ENCODE measurements at regions of chr9 and their contacts with region 1.

Region 1: DNA sequence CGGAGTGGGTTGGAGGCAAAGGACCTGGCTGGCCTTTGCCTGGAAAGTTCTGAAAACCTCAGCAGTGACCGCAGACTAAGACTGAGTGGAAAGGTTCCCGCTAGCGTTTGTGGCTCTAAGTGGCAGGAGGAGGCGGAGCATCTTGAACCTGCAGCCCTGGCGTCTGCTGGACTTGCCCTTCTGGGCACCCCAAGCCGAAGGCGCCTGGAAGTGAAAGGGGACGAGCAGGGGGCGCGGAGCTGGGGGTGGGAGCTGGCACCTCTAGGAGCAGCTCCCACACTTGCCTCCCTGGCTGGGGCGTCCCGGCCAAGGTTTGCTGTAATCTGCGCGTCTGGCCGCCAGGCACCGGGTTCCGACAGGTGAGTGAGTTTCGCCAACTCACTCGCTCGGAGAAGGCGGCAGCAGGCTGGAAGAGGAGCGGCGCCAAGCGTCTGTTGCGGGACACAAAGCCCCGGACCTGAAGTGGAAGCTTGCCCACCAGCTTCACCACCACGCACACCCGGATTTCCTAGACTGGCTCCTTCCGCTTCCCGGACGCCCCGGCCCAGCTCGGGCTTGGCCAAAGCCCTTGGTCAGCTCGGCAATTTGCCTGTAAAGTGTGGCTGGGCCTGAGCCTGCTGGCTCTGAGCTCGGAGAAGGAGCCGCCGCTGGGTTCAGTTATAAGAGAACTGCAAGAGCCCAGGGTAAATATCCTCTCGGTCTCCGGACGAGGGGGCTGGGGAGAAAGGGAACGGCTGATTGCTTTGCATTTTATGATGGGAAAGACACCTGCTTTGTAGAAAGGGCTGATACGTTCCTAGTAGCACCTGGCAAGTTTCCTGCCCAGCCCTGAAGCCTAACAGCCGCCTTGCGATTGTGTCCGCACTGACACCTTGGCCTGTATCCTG is at the start of gene GNA14:
- DNase-seq: no peak
- H3K4me3 ChIP-seq: no peak within 1 kb of the TSS
- H3K4me3 Mint-ChIP-seq: peak within 1 kb of the TSS in 5 of 7 donors; percentile 12 to 65 (median 50)
- H3K27ac ChIP-seq: no peak within 1 kb of the TSS
- H3K27ac Mint-ChIP-seq: no peak within 1 kb of the TSS
- H3K4me1 ChIP-seq: no peaks in the 10 kb centered on the region
- H3K4me1 Mint-ChIP-seq: peaks cover 5 to 17% (median 8%) of the 10 kb centered on the region in 3 donors
- H3K27me3 ChIP-seq: no peaks in the 10 kb centered on the region
- H3K27me3 Mint-ChIP-seq: peaks cover 26 to 50% of the 10 kb centered on the region in 2 donors
- total RNA-seq, gene GNA14: not detected

Region 2: GRCh38 chr9:77632652-77633051 is 15.8 kb before region 1 on chr9:
- CTCF ChIA-PET with region 1: no interaction called
- POLR2A ChIA-PET with region 1: interaction called, 14 read pairs
- DNase-seq: no peak
- H3K4me3 ChIP-seq: no peak overlapping the region
- H3K4me3 Mint-ChIP-seq: no peak overlapping the region
- H3K27ac ChIP-seq: no peak overlapping the region
- H3K27ac Mint-ChIP-seq: no peak overlapping the region
- H3K4me1 ChIP-seq: no peaks in the 10 kb centered on the region
- H3K4me1 Mint-ChIP-seq: no peaks in the 10 kb centered on the region
- H3K27me3 ChIP-seq: no peaks in the 10 kb centered on the region
- H3K27me3 Mint-ChIP-seq: peaks cover 0 to 3% of the 10 kb centered on the region in 2 donors

Measured in CD8-positive, alpha-beta memory T cell (primary cell).